ENCODE measurements at regions of chr1 and their contacts with region 1.

Region 1: GRCh38 chr1:181676269-181676668 is 193.0 kb downstream of the CACNA1E start:
- ATAC-seq: peak; percentile 63 to 86 (median 71)
- H3K4me3 ChIP-seq: no peak overlapping the region
- H3K27ac ChIP-seq: no peak overlapping the region
- H3K4me1 ChIP-seq: peaks cover 7 to 16% of the 10 kb centered on the region in 2 donors

Region 2: GRCh38 chr1:181587870-181588438 is 88.3 kb before region 1 on chr1:
- in situ Hi-C with region 1: loop called in 1 of 9 experiments (anchors 25 kb)
- ATAC-seq: peak in 3 of 8 experiments; percentile 65 to 88 (median 85)
- H3K4me3 ChIP-seq: no peak overlapping the region
- H3K27ac ChIP-seq: no peak overlapping the region
- H3K4me1 ChIP-seq: peaks cover 4 to 15% of the 10 kb centered on the region in 2 donors